ENCODE measurements at regions of chr5 and their contacts with region 1.

Region 1: GRCh38 chr5:112707187-112708102 is 30.2 kb upstream of the APC start:
- DNase-seq: peak; percentile 98
- ATAC-seq: peak; percentile 93
- H3K4me3 ChIP-seq: peak overlapping the region; percentile 68 to 91 (median 81)
- H3K4me3 Mint-ChIP-seq: peak overlapping the region; percentile 95
- H3K27ac ChIP-seq: peak overlapping the region; percentile 66 to 85
- H3K27ac Mint-ChIP-seq: peak overlapping the region; percentile 96
- H3K4me1 ChIP-seq: peaks cover 22 to 31% of the 10 kb centered on the region in 2 donors
- H3K4me1 Mint-ChIP-seq: peaks cover 51% of the 10 kb centered on the region
- H3K27me3 ChIP-seq: no peaks in the 10 kb centered on the region
- H3K27me3 Mint-ChIP-seq: no peaks in the 10 kb centered on the region
- CTCF ChIP-seq: no peak

Region 2: GRCh38 chr5:111512375-111513130 is 1194.9 kb before region 1 on chr5 and contains the start of gene STARD4:
- CTCF ChIA-PET with region 1: no interaction called
- POLR2A ChIA-PET with region 1: no interaction called
- intact Hi-C with region 1: loop called (anchors 1 kb)
- DNase-seq: peak; percentile 96
- ATAC-seq: peak; percentile 96
- H3K4me3 ChIP-seq: peak within 1 kb of the TSS; percentile 90 to 96 (median 93)
- H3K4me3 Mint-ChIP-seq: peak within 1 kb of the TSS; percentile 99
- H3K27ac ChIP-seq: peak within 1 kb of the TSS; percentile 81 to 82
- H3K27ac Mint-ChIP-seq: peak within 1 kb of the TSS; percentile 98
- H3K4me1 ChIP-seq: peaks cover 10 to 12% of the 10 kb centered on the region in 2 donors
- H3K4me1 Mint-ChIP-seq: peaks cover 36% of the 10 kb centered on the region
- H3K27me3 ChIP-seq: no peaks in the 10 kb centered on the region
- H3K27me3 Mint-ChIP-seq: no peaks in the 10 kb centered on the region
- CTCF ChIP-seq: no peak
- total RNA-seq, gene STARD4: 28.5 and 31.1 TPM in 2 replicates

Region 3: DNA sequence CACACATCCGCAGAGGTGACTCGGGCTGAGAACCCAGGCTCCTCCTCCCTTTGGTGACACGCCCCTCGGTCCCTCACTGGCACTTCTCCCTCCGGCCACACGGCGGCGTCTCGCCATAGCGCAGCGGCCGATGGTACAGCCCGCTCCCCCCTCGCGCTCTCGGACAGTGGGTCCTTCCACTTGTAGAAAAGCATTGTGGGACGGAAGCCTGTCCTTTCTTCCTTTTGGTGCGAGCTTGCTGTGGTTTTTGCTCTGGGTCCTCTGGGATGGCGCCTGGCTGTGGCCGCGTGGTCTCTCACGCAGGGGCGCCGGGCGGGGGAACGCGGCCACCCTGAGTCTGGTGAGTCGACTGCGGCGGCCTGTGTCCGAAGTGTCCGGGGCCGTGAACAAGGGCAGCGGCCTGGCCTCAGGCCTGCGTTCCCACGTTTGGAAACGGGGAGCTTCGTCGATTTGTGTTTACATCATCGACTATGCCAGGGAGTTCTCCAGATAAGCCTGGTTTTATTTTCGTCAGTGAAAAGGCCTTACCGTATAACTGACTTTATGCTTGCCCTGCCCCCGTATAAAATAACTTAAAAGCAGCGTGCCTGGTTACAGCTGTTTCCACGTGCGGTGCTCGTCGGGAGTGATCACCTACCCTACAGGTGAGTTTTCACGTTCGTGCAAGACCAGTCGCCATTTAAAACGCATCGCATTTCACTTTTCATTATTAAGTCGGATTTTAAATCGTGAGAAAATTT is 546.6 kb before region 1 on chr5:
- CTCF ChIA-PET with region 1: no interaction called
- POLR2A ChIA-PET with region 1: no interaction called
- intact Hi-C with region 1: loop called (anchors 1 kb)
- DNase-seq: peak; percentile 95
- ATAC-seq: peak; percentile 99
- H3K4me3 ChIP-seq: peak overlapping the region; percentile 71 to 97 (median 90)
- H3K4me3 Mint-ChIP-seq: peak overlapping the region; percentile 96
- H3K27ac ChIP-seq: peak overlapping the region; percentile 52 to 83
- H3K27ac Mint-ChIP-seq: peak overlapping the region; percentile 90
- H3K4me1 ChIP-seq: peaks cover 14 to 20% of the 10 kb centered on the region in 2 donors
- H3K4me1 Mint-ChIP-seq: peaks cover 24% of the 10 kb centered on the region
- H3K27me3 ChIP-seq: no peaks in the 10 kb centered on the region
- H3K27me3 Mint-ChIP-seq: peaks cover 4% of the 10 kb centered on the region
- CTCF ChIP-seq: peak; percentile 88

Region 4: DNA sequence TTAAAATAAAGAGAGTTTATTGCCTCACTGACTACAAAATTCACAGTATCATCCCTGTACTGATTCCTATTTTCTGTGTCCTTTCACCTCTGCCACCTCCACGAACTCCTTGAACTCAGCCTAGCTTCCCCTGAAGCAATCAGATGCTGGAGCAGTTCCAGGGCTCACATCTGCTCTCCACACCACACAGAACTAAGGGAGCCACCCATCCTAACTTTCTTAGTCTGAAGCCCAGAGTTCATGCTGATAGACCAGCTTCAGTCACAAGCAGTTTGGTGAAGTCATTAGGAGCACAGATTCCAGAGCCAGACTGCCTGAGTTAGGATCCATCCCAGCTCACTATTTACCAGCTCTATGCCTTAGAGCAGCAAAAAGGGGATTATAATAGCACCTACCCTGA is 272.8 kb before region 1 on chr5:
- CTCF ChIA-PET with region 1: no interaction called
- POLR2A ChIA-PET with region 1: no interaction called
- intact Hi-C with region 1: no loop called
- DNase-seq: no peak
- ATAC-seq: no peak
- H3K4me3 ChIP-seq: no peak overlapping the region
- H3K4me3 Mint-ChIP-seq: no peak overlapping the region
- H3K27ac ChIP-seq: no peak overlapping the region
- H3K27ac Mint-ChIP-seq: no peak overlapping the region
- H3K4me1 ChIP-seq: peaks cover 8 to 10% of the 10 kb centered on the region in 2 donors
- H3K4me1 Mint-ChIP-seq: peaks cover 14% of the 10 kb centered on the region
- H3K27me3 ChIP-seq: peaks cover 0 to 8% (median 5%) of the 10 kb centered on the region in 4 experiments
- H3K27me3 Mint-ChIP-seq: peaks cover 30% of the 10 kb centered on the region
- CTCF ChIP-seq: no peak

Region 5: DNA sequence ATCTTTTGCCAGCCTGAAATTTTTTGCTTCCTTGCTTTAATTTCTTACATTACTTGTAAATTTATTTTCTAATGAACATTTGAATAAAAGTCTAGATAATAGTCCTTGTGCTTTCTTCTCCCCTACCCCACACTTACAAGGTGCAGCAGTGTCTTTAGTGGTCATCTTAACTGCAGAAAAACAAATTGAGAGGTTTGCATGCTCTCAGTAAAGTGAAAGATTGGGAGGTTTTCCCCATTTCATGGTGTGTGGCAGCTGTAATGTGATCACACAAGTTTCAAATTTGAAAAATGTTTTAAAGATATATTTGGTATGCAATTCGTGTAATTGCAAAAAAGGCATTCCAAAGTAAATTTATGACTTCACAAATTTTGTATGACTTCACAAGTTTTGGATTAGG is 44.9 kb after region 1 on chr5:
- CTCF ChIA-PET with region 1: interaction called, 4 read pairs
- POLR2A ChIA-PET with region 1: no interaction called
- intact Hi-C with region 1: loop called (anchors 5 kb)
- DNase-seq: no peak
- ATAC-seq: no peak
- H3K4me3 ChIP-seq: no peak overlapping the region
- H3K4me3 Mint-ChIP-seq: no peak overlapping the region
- H3K27ac ChIP-seq: no peak overlapping the region
- H3K27ac Mint-ChIP-seq: no peak overlapping the region
- H3K4me1 ChIP-seq: no peaks in the 10 kb centered on the region
- H3K4me1 Mint-ChIP-seq: peaks cover 5% of the 10 kb centered on the region
- H3K27me3 ChIP-seq: no peaks in the 10 kb centered on the region
- H3K27me3 Mint-ChIP-seq: no peaks in the 10 kb centered on the region
- CTCF ChIP-seq: no peak

Region 6: DNA sequence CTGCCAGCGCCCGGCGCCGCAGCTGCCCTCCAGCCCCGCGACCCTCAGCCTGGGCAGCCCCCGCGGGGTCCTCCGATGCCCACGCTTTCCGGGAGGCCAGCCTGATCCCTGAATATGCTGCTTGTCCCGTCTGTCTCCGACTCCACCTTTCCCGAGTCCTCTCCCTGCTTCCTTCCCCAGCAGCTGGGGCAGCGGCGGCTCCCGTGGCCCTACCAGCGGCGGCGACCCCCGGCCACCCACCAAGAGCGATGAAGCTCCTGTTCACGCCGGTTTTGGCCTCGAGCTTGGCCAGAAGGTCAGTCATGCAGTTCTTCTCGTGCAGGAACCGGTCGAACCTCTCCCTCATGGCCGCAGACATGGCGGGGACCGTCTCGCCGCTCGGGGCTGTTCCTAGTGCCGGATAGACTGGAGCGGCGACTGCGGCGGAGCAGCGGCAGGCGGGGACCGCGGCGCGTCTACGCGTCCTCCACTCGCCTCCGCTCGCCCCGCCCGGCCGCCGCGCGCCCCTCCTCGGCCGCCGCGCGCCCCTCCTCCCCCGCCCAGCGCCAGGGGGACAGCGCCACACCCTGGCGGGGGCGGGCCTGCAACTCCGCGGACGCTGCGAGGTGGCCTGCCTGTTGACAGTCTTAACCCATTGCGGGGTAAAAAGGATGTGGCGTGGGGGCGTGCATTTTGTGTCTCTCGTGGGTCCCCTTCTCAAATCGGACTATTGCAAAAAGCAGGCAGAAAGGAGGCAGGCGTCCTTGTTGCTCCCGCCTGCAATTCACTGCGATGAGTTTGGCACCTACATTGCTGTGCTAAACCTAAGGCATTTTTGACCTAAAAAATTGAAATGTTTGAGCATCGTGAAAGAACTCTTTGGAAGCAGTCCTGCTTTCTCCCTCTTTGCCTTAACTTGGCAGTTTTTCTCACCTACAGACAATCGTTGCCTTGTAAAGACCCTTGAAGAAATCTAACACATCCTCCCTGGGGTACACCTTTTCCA is 214.7 kb after region 1 on chr5 and contains the start of gene REEP5:
- CTCF ChIA-PET with region 1: interaction called, 3 read pairs
- POLR2A ChIA-PET with region 1: no interaction called
- intact Hi-C with region 1: loop called (anchors 5 kb)
- DNase-seq: peak; percentile 91
- ATAC-seq: peak; percentile 74
- H3K4me3 ChIP-seq: peak within 1 kb of the TSS; percentile 70 to 91 (median 85)
- H3K4me3 Mint-ChIP-seq: peak within 1 kb of the TSS; percentile 94
- H3K27ac ChIP-seq: peak within 1 kb of the TSS; percentile 81 to 93
- H3K27ac Mint-ChIP-seq: peak within 1 kb of the TSS; percentile 95
- H3K4me1 ChIP-seq: peaks cover 79% of the 10 kb centered on the region in 2 donors
- H3K4me1 Mint-ChIP-seq: peaks cover 77% of the 10 kb centered on the region
- H3K27me3 ChIP-seq: no peaks in the 10 kb centered on the region
- H3K27me3 Mint-ChIP-seq: no peaks in the 10 kb centered on the region
- CTCF ChIP-seq: peak; percentile 80
- total RNA-seq, gene REEP5: 53.9 and 55.9 TPM in 2 replicates

Region 7: DNA sequence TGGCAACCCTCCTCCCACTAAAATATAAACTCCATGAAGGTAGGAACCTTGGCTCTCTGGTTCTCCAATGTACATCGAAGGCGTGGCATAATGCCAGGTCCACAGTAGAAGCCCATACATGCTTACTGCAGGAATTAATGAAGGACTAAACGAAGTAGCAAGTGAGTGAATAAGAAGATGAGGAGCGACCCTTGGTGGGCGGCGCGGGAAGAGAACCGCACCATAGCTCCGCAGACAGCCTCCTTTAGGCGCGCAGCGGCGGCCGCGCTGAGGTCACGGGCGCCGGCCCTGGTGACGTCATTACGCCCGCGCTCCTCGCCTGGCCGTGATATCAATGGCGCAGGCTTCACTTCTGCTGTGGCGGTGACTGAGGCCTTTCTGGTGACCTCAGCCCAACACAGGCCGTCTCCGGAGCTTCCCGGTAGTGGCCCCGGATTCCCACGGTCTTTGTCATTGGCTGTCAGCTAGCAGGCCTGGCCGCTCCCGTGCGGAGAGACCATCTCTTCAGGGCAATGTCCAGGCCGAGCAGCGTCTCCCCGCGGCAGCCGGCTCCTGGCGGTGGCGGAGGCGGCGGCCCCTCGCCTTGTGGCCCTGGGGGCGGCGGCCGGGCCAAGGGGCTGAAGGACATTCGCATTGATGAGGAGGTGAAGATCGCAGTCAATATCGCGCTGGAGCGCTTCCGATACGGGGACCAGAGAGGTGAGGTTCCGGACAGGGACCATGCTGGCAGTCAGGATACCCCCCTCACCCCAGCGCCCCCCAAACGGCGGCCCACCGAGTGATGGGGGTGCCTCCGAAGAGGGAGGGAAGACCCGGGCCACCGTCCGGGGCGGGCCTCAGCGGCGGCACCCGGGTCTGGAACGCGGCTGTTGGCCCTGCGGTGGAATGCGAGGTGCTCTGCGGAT is 806.2 kb after region 1 on chr5 and contains the start of gene YTHDC2:
- CTCF ChIA-PET with region 1: no interaction called
- POLR2A ChIA-PET with region 1: no interaction called
- intact Hi-C with region 1: loop called (anchors 10 kb)
- DNase-seq: peak; percentile 93
- ATAC-seq: peak; percentile 97
- H3K4me3 ChIP-seq: peak within 1 kb of the TSS; percentile 59 to 93 (median 84)
- H3K4me3 Mint-ChIP-seq: peak within 1 kb of the TSS; percentile 99
- H3K27ac ChIP-seq: peak within 1 kb of the TSS; percentile 83 to 93
- H3K27ac Mint-ChIP-seq: peak within 1 kb of the TSS; percentile 95
- H3K4me1 ChIP-seq: peaks cover 7 to 17% of the 10 kb centered on the region in 2 donors
- H3K4me1 Mint-ChIP-seq: peaks cover 30% of the 10 kb centered on the region
- H3K27me3 ChIP-seq: peaks cover 0 to 8% (median 3%) of the 10 kb centered on the region in 4 experiments
- H3K27me3 Mint-ChIP-seq: peaks cover 18% of the 10 kb centered on the region
- CTCF ChIP-seq: peak; percentile 18
- total RNA-seq, gene YTHDC2: 52.6 and 62.4 TPM in 2 replicates

Measured in B cell (primary cell).